Caco-2 (cell line): ENCODE measurements at regions of chr17 and their contacts with region 1.

Region 1: DNA sequence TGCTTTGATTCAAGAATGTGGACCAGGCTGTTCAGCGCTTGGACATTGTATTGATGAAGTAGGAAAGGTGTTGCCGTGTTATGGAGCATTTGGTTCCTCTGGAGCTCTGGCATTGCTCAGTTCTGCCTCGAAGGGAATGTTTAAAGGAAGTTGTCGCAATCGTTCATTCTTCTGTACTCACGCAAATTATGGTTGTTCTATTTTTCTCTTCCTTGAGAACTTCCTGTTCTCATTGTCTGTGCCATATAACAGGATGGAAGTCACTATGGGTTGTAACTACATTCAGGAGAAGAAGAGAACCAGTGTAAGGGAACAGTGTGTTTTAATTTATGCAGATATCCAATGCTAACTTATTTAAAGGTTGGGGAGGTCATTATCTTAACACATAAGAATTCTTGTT is 13.0 kb downstream of the PCTP start:
- DNase-seq: no peak
- H3K4me3 ChIP-seq: no peak overlapping the region
- H3K4me3 Mint-ChIP-seq: no peak overlapping the region
- H3K27ac Mint-ChIP-seq: no peak overlapping the region
- H3K4me1 ChIP-seq: peaks cover 13% of the 10 kb centered on the region
- H3K4me1 Mint-ChIP-seq: no peaks in the 10 kb centered on the region
- H3K27me3 ChIP-seq: no peaks in the 10 kb centered on the region
- H3K27me3 Mint-ChIP-seq: no peaks in the 10 kb centered on the region
- CTCF ChIP-seq: no peak

Region 2: DNA sequence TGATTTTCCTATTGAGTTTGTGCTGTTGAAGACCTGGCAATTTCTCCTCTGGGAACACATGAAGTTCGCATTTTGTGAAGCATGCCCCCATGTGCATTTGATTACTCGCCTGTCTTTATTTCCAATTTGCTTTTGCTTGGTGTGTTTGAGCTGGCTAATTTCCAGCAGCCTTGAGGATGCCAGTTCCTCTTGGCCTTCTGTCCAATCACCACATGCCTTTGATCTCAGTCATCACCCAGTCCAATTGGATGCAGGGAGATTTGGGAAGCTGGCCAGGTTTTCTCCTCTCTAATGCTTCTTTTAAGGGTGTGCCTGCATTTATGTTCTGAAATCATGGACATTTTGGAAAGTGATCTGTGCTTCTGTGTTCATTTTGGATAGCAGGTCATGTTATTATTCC is 37.4 kb before region 1 on chr17:
- CTCF ChIA-PET with region 1: no interaction called
- POLR2A ChIA-PET with region 1: no interaction called
- intact Hi-C with region 1: loop called (anchors 5 kb)
- DNase-seq: no peak
- H3K4me3 ChIP-seq: no peak overlapping the region
- H3K4me3 Mint-ChIP-seq: no peak overlapping the region
- H3K27ac Mint-ChIP-seq: no peak overlapping the region
- H3K4me1 ChIP-seq: no peaks in the 10 kb centered on the region
- H3K4me1 Mint-ChIP-seq: no peaks in the 10 kb centered on the region
- H3K27me3 ChIP-seq: no peaks in the 10 kb centered on the region
- H3K27me3 Mint-ChIP-seq: peaks cover 31% of the 10 kb centered on the region
- CTCF ChIP-seq: no peak

Region 3: GRCh38 chr17:55750750-55751657 is 12.8 kb before region 1 on chr17 and contains the start of gene PCTP:
- CTCF ChIA-PET with region 1: interaction called, 3 read pairs
- POLR2A ChIA-PET with region 1: no interaction called
- intact Hi-C with region 1: loop called (anchors 1 kb)
- DNase-seq: peak; percentile 95 to 97
- H3K4me3 ChIP-seq: peak within 1 kb of the TSS; percentile 63
- H3K4me3 Mint-ChIP-seq: peak within 1 kb of the TSS; percentile 88
- H3K27ac Mint-ChIP-seq: peak within 1 kb of the TSS; percentile 15
- H3K4me1 ChIP-seq: 0 out of 2 replicates have a peak, but pooled peaks cover 6% of the 10 kb centered on the region
- H3K4me1 Mint-ChIP-seq: peaks cover 14% of the 10 kb centered on the region
- H3K27me3 ChIP-seq: no peaks in the 10 kb centered on the region
- H3K27me3 Mint-ChIP-seq: peaks cover 6% of the 10 kb centered on the region
- CTCF ChIP-seq: peak; percentile 42 to 62
- total RNA-seq, gene PCTP: 15.7 and 16.7 TPM in 2 replicates

Region 4: GRCh38 chr17:55783684-55784245 is 19.9 kb after region 1 on chr17:
- CTCF ChIA-PET with region 1: no interaction called
- POLR2A ChIA-PET with region 1: no interaction called
- intact Hi-C with region 1: no loop called
- DNase-seq: no peak
- H3K4me3 ChIP-seq: no peak overlapping the region
- H3K4me3 Mint-ChIP-seq: no peak overlapping the region
- H3K27ac Mint-ChIP-seq: no peak overlapping the region
- H3K4me1 ChIP-seq: no peaks in the 10 kb centered on the region
- H3K4me1 Mint-ChIP-seq: no peaks in the 10 kb centered on the region
- H3K27me3 ChIP-seq: no peaks in the 10 kb centered on the region
- H3K27me3 Mint-ChIP-seq: peaks cover 11% of the 10 kb centered on the region
- CTCF ChIP-seq: no peak

Region 5: DNA sequence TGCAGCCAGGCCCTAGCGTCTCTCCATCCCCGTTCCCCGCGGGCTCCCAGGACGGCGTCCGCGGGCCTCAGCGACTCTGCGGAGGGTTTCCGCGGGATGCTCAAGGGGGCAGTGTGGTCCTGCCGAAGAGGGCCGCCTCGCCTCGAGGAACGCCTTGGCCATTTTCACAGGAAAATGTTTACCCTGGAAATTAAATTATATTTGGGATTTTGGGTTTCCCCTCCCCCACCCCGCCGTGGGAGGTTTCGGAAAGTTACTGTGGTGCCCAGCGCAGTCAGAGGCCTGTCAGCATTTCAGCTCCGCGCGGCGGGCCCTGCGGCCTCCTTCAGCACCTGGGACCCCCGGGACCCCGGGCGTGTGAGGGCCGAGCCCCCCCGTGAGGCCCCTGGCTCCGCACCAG is 81.5 kb after region 1 on chr17:
- CTCF ChIA-PET with region 1: no interaction called
- POLR2A ChIA-PET with region 1: no interaction called
- intact Hi-C with region 1: no loop called
- DNase-seq: no peak
- H3K4me3 ChIP-seq: no peak overlapping the region
- H3K4me3 Mint-ChIP-seq: no peak overlapping the region
- H3K27ac Mint-ChIP-seq: no peak overlapping the region
- H3K4me1 ChIP-seq: no peaks in the 10 kb centered on the region
- H3K4me1 Mint-ChIP-seq: no peaks in the 10 kb centered on the region
- H3K27me3 ChIP-seq: no peaks in the 10 kb centered on the region
- H3K27me3 Mint-ChIP-seq: peaks cover 9% of the 10 kb centered on the region
- CTCF ChIP-seq: no peak